Heart left ventricle (tissue), 16 donors: ENCODE measurements at regions of chr4 and their contacts with region 1.

Region 1: DNA sequence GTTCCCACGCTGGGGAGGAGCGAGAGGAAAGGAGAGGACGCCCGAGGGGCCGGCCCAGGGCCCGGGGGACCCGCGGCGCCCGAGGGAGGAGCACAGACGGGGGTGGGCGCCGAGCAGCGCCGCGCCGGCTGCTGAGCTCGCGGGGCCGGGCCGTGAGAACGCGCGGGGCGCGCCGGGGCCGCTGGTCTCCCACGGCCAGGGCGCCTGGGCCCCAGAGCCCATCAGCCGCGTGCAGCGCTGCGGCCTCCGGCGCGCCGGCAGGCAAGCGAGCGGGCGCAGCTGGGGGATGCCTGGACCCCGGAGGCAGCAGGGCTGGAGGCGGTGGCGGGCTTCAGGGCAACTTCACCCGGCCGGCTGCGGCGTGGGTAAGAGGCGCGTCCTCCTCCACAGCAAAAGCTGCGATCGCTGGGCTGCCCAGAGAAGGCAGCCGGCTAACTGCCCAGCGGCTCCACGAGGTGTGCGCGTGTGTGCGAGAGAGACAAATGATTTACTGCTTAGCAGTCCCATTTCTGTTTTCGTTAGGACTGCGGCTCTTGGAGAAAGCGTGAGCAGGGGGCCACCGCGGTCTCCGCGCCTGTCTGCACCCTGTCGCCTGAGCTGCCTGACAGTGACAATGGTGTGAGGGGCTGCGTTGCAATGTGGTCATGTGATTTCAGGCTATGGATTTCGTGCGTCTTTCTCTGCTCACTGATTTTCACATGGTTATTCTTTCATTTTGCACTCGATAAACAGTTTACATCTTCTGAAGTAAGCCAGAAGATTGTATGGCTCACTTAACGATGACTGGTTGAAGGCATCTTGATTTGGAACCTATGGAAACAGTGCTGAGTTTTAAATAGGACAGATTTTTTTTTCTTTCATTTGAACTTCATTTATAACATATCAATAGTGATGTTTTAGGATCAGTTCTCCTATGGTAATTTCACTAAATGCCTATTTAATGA is 1.2 kb downstream of the GUCY1A1 start:
- DNase-seq: peak; percentile 45 to 85 (median 69)
- ATAC-seq: peak; percentile 41 to 88 (median 78)
- H3K4me3 ChIP-seq: peak overlapping the region; percentile 30 to 81 (median 71)
- H3K27ac ChIP-seq: peak overlapping the region; percentile 84 to 96 (median 92)
- H3K4me1 ChIP-seq: peaks cover 0 to 31% (median 14%) of the 10 kb centered on the region in 12 donors
- H3K27me3 ChIP-seq: peaks cover 0 to 9% (median 0%) of the 10 kb centered on the region in 9 donors
- CTCF ChIP-seq: no peak
- POLR2A ChIP-seq: peak in 1 of 2 donors; percentile 17

Region 2: GRCh38 chr4:155342142-155342541 is 325.7 kb before region 1 on chr4:
- intact Hi-C with region 1: no loop called
- DNase-seq: no peak
- ATAC-seq: no peak
- H3K4me3 ChIP-seq: no peak overlapping the region
- H3K27ac ChIP-seq: no peak overlapping the region
- H3K4me1 ChIP-seq: no peaks in the 10 kb centered on the region
- H3K27me3 ChIP-seq: no peaks in the 10 kb centered on the region
- CTCF ChIP-seq: no peak
- POLR2A ChIP-seq: no peak

Region 3: DNA sequence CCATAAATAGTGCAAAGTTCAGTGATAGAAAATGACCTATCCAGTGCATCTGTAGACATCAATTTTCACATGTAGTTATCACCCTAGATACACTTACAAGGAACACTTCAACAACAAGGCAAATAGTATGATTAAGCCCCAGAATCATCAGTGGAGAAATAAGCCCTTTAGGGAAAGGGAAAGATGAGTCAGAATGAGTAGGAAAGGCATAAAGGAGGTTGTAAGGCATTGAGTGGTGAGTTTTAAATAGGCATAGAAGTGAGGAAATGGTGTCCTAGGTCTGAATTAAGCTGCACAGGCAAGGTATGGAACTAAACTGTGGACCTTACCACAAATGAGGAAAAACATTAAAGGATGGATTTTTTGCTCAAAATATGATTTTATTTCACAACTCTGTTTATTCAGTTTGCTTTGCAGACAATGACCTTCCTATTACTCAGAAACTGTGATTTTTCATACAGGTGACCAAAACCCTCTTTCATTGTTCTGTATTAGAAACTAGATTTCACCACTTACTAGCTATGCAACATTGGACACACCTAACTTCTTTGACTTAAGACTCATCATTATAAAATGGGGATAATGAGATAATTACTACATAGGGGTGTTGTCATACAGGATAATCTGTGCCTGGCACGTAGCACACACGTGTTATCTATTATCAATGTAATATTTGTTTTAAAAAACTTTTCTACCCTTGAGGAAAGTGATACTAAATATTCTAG is 234.0 kb before region 1 on chr4:
- intact Hi-C with region 1: loop called in 1 of 10 experiments (anchors 10 kb)
- DNase-seq: no peak
- ATAC-seq: no peak
- H3K4me3 ChIP-seq: no peak overlapping the region
- H3K27ac ChIP-seq: no peak overlapping the region
- H3K4me1 ChIP-seq: no peaks in the 10 kb centered on the region
- H3K27me3 ChIP-seq: no peaks in the 10 kb centered on the region
- CTCF ChIP-seq: no peak
- POLR2A ChIP-seq: no peak

Region 4: GRCh38 chr4:155497306-155497705 is 170.5 kb before region 1 on chr4:
- intact Hi-C with region 1: loop called in 2 of 10 experiments (anchors 5 to 10 kb)
- DNase-seq: no peak
- ATAC-seq: peak in 1 of 4 donors; percentile 48
- H3K4me3 ChIP-seq: peak overlapping the region in 10 of 12 donors; percentile 3 to 61 (median 47)
- H3K27ac ChIP-seq: peak overlapping the region in 4 of 12 donors; percentile 60 to 78 (median 68)
- H3K4me1 ChIP-seq: peaks cover 0 to 6% (median 0%) of the 10 kb centered on the region in 12 donors
- H3K27me3 ChIP-seq: no peaks in the 10 kb centered on the region
- CTCF ChIP-seq: peak in 6 of 12 donors; percentile 14 to 33 (median 19)
- POLR2A ChIP-seq: no peak

Region 5: DNA sequence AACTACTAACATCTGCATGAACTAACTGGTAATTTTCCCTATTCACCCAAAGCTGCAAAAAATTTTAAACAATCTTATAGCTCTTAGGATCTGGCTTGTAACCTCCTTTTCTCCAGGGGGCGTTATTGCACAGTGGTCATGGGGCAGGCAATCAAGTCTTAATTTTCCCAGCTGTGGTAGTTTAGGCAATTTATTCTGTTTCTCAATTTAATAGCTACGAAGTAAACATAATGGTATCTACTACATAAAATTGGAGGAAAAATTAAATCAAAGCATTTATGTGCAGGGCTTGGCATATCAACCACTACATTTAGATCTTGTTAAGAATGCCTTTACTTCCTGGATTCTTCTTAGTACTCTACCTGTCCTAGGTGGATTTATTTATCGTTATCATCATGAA is 138.6 kb before region 1 on chr4:
- intact Hi-C with region 1: loop called in 3 of 10 experiments (anchors 5 to 10 kb)
- DNase-seq: no peak
- ATAC-seq: no peak
- H3K4me3 ChIP-seq: no peak overlapping the region
- H3K27ac ChIP-seq: no peak overlapping the region
- H3K4me1 ChIP-seq: peaks cover 0 to 47% (median 13%) of the 10 kb centered on the region in 12 donors
- H3K27me3 ChIP-seq: no peaks in the 10 kb centered on the region
- CTCF ChIP-seq: peak in 5 of 12 donors; percentile 10 to 45 (median 21)
- POLR2A ChIP-seq: no peak

Region 6: DNA sequence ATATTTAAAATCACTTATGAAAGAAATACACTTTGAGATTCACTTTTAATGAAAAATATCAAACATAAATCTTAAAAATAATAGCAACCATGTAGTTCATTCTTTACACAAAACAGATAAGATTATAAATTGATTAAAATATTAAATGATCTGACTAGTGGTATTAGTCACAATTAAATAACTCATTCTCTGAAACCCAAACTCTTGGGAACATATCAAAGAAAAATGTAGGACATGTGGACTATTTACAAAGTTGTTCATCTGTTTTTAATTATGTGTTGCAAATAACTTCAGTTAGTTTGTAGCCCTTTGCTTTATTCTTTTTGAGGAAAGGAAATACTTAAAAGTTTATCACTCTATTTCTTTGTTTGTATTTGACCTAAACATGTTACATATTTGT is 10.7 kb before region 1 on chr4:
- intact Hi-C with region 1: loop called in 1 of 10 experiments (anchors 1 kb)
- DNase-seq: no peak
- ATAC-seq: no peak
- H3K4me3 ChIP-seq: no peak overlapping the region
- H3K27ac ChIP-seq: no peak overlapping the region
- H3K4me1 ChIP-seq: peaks cover 0 to 17% (median 7%) of the 10 kb centered on the region in 12 donors
- H3K27me3 ChIP-seq: no peaks in the 10 kb centered on the region
- CTCF ChIP-seq: no peak
- POLR2A ChIP-seq: no peak

Region 7: DNA sequence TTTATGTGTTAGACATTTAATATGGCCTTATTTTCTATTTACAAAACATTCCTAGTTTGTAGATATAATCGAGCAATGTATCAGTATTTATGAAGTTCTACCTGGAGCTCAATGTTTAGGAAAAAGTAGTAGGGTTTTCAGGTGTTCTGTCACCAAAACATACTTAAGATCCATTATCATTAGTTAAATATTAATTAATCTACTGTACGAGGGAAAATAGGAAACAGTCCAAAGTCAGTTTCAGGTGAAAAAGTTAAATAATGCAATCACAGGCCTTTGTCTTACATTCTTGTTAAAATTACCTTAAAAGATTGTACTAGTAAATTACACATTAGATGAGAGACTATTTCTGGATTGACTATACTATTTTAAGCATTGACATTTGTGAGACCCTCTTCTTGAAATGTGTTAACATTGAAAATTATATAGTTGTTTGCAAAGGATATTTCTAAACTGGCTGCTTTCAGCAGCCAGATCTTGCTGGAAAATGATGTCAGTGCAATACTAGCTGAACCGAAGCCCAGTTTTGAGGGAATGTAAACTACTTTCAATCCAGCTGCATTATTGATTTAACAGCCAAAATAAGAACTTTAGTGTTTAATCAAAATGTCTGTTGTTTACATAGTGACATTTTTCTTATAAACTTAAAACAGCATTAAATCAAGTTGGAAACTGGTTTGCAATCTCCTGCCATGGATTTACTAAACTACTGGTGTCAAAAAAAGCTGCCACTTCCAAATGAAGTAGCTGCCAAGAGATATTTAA is 110.3 kb after region 1 on chr4:
- intact Hi-C with region 1: loop called in 4 of 10 experiments (anchors 5 to 10 kb)
- DNase-seq: no peak
- ATAC-seq: peak in 1 of 4 donors; percentile 41
- H3K4me3 ChIP-seq: no peak overlapping the region
- H3K27ac ChIP-seq: peak overlapping the region in 6 of 12 donors; percentile 8 to 58 (median 17)
- H3K4me1 ChIP-seq: peaks cover 0 to 23% (median 6%) of the 10 kb centered on the region in 12 donors
- H3K27me3 ChIP-seq: no peaks in the 10 kb centered on the region
- CTCF ChIP-seq: no peak
- POLR2A ChIP-seq: no peak